Head of caudate nucleus (tissue), 42 donors: ENCODE measurements at regions of chr11 and their contacts with region 1.

Region 1: GRCh38 chr11:45339729-45340519 is 53.8 kb upstream of the SYT13 start:
- DNase-seq: peak; percentile 82 to 97 (median 93)

Region 2: GRCh38 chr11:45771566-45772448 is 431.9 kb after region 1 on chr11:
- intact Hi-C with region 1: loop called (anchors 5 kb)
- DNase-seq: peak; percentile 71 to 96 (median 89)